Activated CD4-positive, alpha-beta T cell treated with anti-CD3 and anti-CD28 coated beads for 36 hours (primary cell): ENCODE measurements at regions of chr20 and their contacts with region 1.

Region 1: GRCh38 chr20:56468316-56469082 is at the start of gene RTF2:
- DNase-seq: peak; percentile 98
- ATAC-seq: peak; percentile 97
- H3K4me3 Mint-ChIP-seq: peak within 1 kb of the TSS; percentile 100
- H3K27ac Mint-ChIP-seq: peak within 1 kb of the TSS; percentile 100
- H3K4me1 Mint-ChIP-seq: peaks cover 30% of the 10 kb centered on the region
- H3K27me3 Mint-ChIP-seq: no peaks in the 10 kb centered on the region
- total RNA-seq, gene RTF2: 68.5 to 80.8 TPM

Region 2: DNA sequence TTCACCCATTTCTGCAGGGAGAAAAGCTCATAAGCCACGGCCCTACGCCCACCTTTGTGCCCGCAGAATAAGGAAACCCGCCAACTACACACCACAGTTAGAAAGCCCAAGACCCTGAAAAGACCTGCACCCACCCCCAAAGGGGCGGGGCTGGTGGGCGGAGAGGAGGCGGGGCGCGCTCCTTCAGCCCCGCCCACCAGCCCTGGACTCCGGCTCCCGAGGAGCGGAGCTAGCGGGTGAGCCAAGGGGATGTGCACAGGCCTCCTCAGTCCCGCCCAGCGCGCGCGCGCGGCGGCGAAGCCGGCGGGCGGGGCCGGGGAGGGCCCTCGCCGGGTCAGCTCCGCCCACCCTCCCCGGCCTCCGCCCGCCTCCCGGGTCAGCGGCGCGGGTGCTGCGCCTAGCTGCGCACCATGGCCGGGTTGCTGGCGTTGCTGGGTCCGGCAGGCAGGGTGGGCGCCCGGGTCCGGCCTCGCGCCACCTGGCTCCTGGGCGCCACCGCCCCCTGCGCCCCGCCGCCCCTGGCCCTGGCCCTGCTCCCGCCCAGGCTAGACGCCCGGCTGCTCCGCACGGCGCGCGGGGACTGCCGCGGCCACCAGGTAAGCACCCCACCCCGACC is 109.8 kb before region 1 on chr20 and contains the start of gene FAM210B:
- CTCF ChIA-PET with region 1: no interaction called
- POLR2A ChIA-PET with region 1: interaction called, 3 read pairs
- intact Hi-C with region 1: loop called in 1 of 2 experiments (anchors 1 kb)
- DNase-seq: peak; percentile 90
- ATAC-seq: peak; percentile 100
- H3K4me3 Mint-ChIP-seq: peak within 1 kb of the TSS; percentile 82
- H3K27ac Mint-ChIP-seq: peak within 1 kb of the TSS; percentile 58
- H3K4me1 Mint-ChIP-seq: peaks cover 17% of the 10 kb centered on the region
- H3K27me3 Mint-ChIP-seq: no peaks in the 10 kb centered on the region
- total RNA-seq, gene FAM210B: 4.5 to 4.8 TPM

Region 3: GRCh38 chr20:56392282-56393137 is 76.0 kb before region 1 on chr20 and contains the start of gene CSTF1:
- CTCF ChIA-PET with region 1: interaction called, 3 read pairs
- POLR2A ChIA-PET with region 1: interaction called, 3 read pairs
- intact Hi-C with region 1: loop called (anchors 1 kb)
- DNase-seq: peak; percentile 100
- ATAC-seq: peak; percentile 90
- H3K4me3 Mint-ChIP-seq: no peak within 1 kb of the TSS
- H3K27ac Mint-ChIP-seq: no peak within 1 kb of the TSS
- H3K4me1 Mint-ChIP-seq: peaks cover 43% of the 10 kb centered on the region
- H3K27me3 Mint-ChIP-seq: no peaks in the 10 kb centered on the region
- total RNA-seq, gene CSTF1: 62.0 to 84.2 TPM

Region 4: DNA sequence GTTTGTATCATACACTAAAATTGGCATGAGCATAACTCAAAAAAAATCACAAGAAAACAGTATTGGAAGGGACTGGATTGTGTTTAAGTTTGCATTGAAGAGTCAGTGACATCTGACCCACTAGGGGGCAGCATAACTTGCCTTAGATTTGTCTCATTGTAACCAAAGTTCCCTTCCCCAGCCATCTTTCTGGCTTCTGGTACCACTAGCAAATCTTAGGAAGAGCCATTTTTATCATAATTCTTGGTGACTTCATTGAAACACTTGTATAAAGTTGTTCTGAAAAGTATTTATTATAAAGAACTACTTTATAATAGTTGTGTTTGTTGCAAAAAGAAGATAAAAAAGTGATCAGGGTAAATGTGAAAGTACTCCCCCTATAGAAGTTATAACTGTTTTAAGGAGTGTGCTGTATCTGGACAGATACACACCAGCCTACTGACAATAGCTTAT is 68.4 kb before region 1 on chr20:
- CTCF ChIA-PET with region 1: interaction called, 4 read pairs
- POLR2A ChIA-PET with region 1: no interaction called
- intact Hi-C with region 1: loop called (anchors 1 kb)
- DNase-seq: peak; percentile 74
- ATAC-seq: peak; percentile 70
- H3K4me3 Mint-ChIP-seq: no peak overlapping the region
- H3K27ac Mint-ChIP-seq: no peak overlapping the region
- H3K4me1 Mint-ChIP-seq: peaks cover 32% of the 10 kb centered on the region
- H3K27me3 Mint-ChIP-seq: no peaks in the 10 kb centered on the region

Region 5: GRCh38 chr20:56453352-56453751 is 15.1 kb before region 1 on chr20:
- CTCF ChIA-PET with region 1: interaction called, 3 read pairs
- POLR2A ChIA-PET with region 1: no interaction called
- intact Hi-C with region 1: loop called in 1 of 2 experiments (anchors 1 kb)
- DNase-seq: no peak
- ATAC-seq: no peak
- H3K4me3 Mint-ChIP-seq: no peak overlapping the region
- H3K27ac Mint-ChIP-seq: no peak overlapping the region
- H3K4me1 Mint-ChIP-seq: peaks cover 24% of the 10 kb centered on the region
- H3K27me3 Mint-ChIP-seq: no peaks in the 10 kb centered on the region

Region 6: GRCh38 chr20:57351042-57351783 is 882.7 kb after region 1 on chr20 and contains the start of gene RAE1:
- CTCF ChIA-PET with region 1: no interaction called
- POLR2A ChIA-PET with region 1: no interaction called
- intact Hi-C with region 1: loop called in 1 of 2 experiments (anchors 1 kb)
- DNase-seq: peak; percentile 94
- ATAC-seq: peak; percentile 84
- H3K4me3 Mint-ChIP-seq: peak within 1 kb of the TSS; percentile 96
- H3K27ac Mint-ChIP-seq: peak within 1 kb of the TSS; percentile 89
- H3K4me1 Mint-ChIP-seq: peaks cover 37% of the 10 kb centered on the region
- H3K27me3 Mint-ChIP-seq: no peaks in the 10 kb centered on the region
- total RNA-seq, gene RAE1: 42.7 to 48.9 TPM